CD4-positive, alpha-beta T cell (primary cell): ENCODE measurements at regions of chr3 and their contacts with region 1.

Region 1: DNA sequence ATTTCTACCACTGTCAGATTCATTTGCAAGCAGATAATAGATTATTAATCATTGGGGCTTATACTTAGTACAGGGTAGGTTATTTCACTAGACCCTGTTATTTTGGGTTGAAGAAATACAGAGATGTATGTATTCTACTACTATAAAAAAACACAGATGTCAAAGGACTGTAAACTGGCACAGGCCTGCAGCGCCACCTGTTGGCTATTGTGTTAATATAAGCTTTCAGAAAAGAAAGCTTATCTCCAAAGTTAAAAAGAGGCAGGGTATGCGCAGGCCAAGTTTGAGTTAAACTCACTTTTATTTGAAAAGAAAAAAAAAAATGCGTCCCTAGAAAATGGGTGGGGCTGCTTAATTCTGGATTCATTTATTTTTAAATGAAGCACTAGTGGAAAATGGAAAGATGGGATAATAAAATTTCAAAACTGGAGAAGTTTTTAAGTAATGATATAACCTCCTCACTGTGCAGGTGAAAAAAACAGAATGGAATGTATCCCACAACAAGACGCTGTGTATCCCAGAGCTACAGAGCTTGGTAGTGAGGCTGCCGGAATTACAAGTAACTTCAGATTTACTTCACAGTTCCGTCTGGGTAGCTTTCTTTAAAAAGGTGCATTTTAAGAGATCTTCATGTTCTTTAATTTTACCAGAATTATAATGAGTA is 407.2 kb upstream of the TGFBR2 start:
- DNase-seq: peak; percentile 49 to 80 (median 59)
- ATAC-seq: peak; percentile 37
- H3K4me3 ChIP-seq: no peak overlapping the region
- H3K4me3 Mint-ChIP-seq: no peak overlapping the region
- H3K27ac ChIP-seq: no peak overlapping the region
- H3K27ac Mint-ChIP-seq: no peak overlapping the region
- H3K4me1 ChIP-seq: no peaks in the 10 kb centered on the region
- H3K4me1 Mint-ChIP-seq: peaks cover 5% of the 10 kb centered on the region
- H3K27me3 ChIP-seq: no peaks in the 10 kb centered on the region
- H3K27me3 Mint-ChIP-seq: no peaks in the 10 kb centered on the region
- CTCF ChIP-seq: peak; percentile 85

Region 2: DNA sequence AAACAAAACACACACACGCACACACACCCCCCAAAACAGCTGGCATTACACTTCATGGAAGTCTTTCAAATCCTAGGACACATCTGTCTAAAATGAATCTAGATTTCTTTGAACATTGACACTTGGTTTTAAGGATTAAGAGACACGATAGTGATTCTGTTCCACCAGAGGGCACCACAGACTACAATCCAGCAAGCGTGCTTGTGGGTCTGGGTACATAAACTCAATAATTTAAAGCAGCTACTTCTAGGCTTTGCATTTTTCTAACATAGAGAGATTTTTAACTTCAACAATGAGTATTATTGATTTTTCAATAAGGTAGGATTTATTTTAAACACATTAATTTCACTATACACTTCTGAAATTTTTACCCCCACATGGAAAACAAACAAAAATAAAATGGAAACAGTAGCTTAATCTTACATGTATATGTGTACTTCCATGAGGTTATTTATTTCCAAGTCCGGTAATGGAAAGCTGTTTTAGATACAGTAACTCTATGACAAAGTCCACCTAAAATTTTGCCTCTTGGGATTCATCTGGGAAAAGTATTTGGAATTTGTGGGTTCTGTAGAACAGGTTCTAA is 156.9 kb before region 1 on chr3:
- CTCF ChIA-PET with region 1: interaction called, 3 read pairs
- POLR2A ChIA-PET with region 1: no interaction called
- intact Hi-C with region 1: loop called (anchors 2 to 10 kb)
- DNase-seq: peak; percentile 24 to 76 (median 48)
- ATAC-seq: peak; percentile 66
- H3K4me3 ChIP-seq: no peak overlapping the region
- H3K4me3 Mint-ChIP-seq: no peak overlapping the region
- H3K27ac ChIP-seq: no peak overlapping the region
- H3K27ac Mint-ChIP-seq: no peak overlapping the region
- H3K4me1 ChIP-seq: no peaks in the 10 kb centered on the region
- H3K4me1 Mint-ChIP-seq: peaks cover 6% of the 10 kb centered on the region
- H3K27me3 ChIP-seq: peaks cover 0 to 4% of the 10 kb centered on the region in 2 experiments
- H3K27me3 Mint-ChIP-seq: peaks cover 36% of the 10 kb centered on the region
- CTCF ChIP-seq: peak; percentile 69

Region 3: GRCh38 chr3:30112902-30113484 is 86.2 kb before region 1 on chr3:
- CTCF ChIA-PET with region 1: no interaction called
- POLR2A ChIA-PET with region 1: interaction called, 3 read pairs
- intact Hi-C with region 1: loop called (anchors 5 kb)
- DNase-seq: peak in 3 of 14 experiments; percentile 56 to 57 (median 57)
- ATAC-seq: no peak
- H3K4me3 ChIP-seq: no peak overlapping the region
- H3K4me3 Mint-ChIP-seq: no peak overlapping the region
- H3K27ac ChIP-seq: no peak overlapping the region
- H3K27ac Mint-ChIP-seq: no peak overlapping the region
- H3K4me1 ChIP-seq: no peaks in the 10 kb centered on the region
- H3K4me1 Mint-ChIP-seq: peaks cover 7% of the 10 kb centered on the region
- H3K27me3 ChIP-seq: no peaks in the 10 kb centered on the region
- H3K27me3 Mint-ChIP-seq: peaks cover 5% of the 10 kb centered on the region
- CTCF ChIP-seq: peak; percentile 73